ENCODE measurements at regions of chr12 and their contacts with region 1.

Region 1: DNA sequence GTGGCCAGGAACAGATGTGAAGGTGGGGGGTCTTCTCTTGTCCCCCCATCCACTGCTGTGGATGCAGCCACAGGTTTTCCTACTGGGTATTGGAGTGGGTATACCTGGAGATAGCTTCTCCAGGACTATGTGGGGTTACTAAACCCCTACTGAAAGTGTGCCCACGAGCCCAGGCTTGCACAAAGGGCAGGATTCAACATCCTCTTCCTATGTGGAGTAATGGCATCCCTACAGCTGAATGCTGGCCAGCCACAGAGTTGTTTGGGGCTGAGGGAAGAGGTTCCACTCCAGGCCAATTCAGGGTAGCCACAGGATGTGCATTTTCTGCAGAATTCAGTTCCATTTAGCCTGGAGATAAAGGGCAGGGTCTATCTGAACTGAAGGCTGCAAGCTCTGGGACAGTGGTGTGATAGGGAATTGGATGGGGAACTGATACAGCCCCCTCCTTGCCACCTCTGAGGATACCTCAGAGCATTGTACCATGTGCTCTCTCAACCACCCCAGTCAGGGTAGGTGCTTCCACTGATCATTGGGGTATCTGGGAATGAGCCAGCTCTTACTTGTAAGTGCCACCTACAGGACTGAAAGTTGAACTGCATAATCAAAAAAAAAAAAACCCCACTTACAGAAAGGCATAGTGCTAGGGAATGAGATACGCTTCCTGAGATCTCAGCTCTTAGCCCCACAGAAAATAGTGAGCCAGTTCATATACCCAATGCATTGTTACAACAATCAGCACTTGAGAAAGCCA is 187.1 kb downstream of the KITLG start:
- DNase-seq: no peak
- H3K4me3 Mint-ChIP-seq: no peak overlapping the region
- H3K27ac Mint-ChIP-seq: no peak overlapping the region
- H3K4me1 Mint-ChIP-seq: peaks cover 11% of the 10 kb centered on the region
- H3K27me3 Mint-ChIP-seq: peaks cover 2% of the 10 kb centered on the region

Region 2: GRCh38 chr12:88035271-88035906 is 357.8 kb before region 1 on chr12:
- intact Hi-C with region 1: loop called (anchors 10 kb)
- DNase-seq: peak; percentile 97
- H3K4me3 Mint-ChIP-seq: peak overlapping the region; percentile 99
- H3K27ac Mint-ChIP-seq: peak overlapping the region; percentile 98
- H3K4me1 Mint-ChIP-seq: peaks cover 40% of the 10 kb centered on the region
- H3K27me3 Mint-ChIP-seq: no peaks in the 10 kb centered on the region

Region 3: DNA sequence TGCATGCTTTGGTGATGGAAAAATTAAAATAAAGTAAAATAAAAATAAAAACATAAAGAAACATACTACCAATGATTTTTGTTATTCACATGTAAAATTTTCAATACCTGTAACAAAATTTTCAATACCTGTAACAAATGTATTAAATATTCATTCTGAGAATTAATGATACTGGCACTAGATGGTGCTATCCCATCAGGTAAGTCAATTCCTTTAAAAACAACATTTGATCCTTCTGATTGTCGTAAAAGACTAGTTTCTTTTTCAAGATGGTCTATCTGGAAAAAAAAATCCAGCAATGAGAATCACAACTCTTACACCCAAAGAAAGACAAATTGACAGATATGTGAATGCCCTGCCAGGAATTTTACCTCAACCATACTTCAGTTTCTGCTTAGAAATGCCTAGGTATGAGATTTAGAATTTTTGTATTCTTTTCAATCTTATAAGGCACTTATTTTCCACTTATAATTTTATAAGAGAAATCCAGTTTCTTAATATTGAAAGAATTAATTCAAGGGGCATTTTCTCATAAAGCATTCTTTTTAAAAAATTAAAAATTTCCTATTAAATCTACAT is 282.0 kb before region 1 on chr12:
- intact Hi-C with region 1: loop called (anchors 2 kb)
- DNase-seq: no peak
- H3K4me3 Mint-ChIP-seq: no peak overlapping the region
- H3K27ac Mint-ChIP-seq: no peak overlapping the region
- H3K4me1 Mint-ChIP-seq: no peaks in the 10 kb centered on the region
- H3K27me3 Mint-ChIP-seq: no peaks in the 10 kb centered on the region

Region 4: GRCh38 chr12:88141770-88142609 is 251.2 kb before region 1 on chr12 and contains the starts of genes CEP290 and TMTC3:
- intact Hi-C with region 1: loop called (anchors 1 kb)
- DNase-seq: peak; percentile 97
- H3K4me3 Mint-ChIP-seq: peak within 1 kb of the TSS; percentile 91
- H3K27ac Mint-ChIP-seq: peak within 1 kb of the TSS; percentile 96
- H3K4me1 Mint-ChIP-seq: peaks cover 32% of the 10 kb centered on the region
- H3K27me3 Mint-ChIP-seq: no peaks in the 10 kb centered on the region
- total RNA-seq, gene CEP290: 17.2 and 17.9 TPM in 2 replicates
- total RNA-seq, gene TMTC3: 8.2 and 8.3 TPM in 2 replicates

Region 5: GRCh38 chr12:88153959-88154358 is 239.2 kb before region 1 on chr12:
- intact Hi-C with region 1: loop called (anchors 1 kb)
- DNase-seq: no peak
- H3K4me3 Mint-ChIP-seq: no peak overlapping the region
- H3K27ac Mint-ChIP-seq: no peak overlapping the region
- H3K4me1 Mint-ChIP-seq: peaks cover 8% of the 10 kb centered on the region
- H3K27me3 Mint-ChIP-seq: no peaks in the 10 kb centered on the region

Region 6: GRCh38 chr12:88235183-88235833 is 157.9 kb before region 1 on chr12:
- intact Hi-C with region 1: loop called (anchors 1 kb)
- DNase-seq: no peak
- H3K4me3 Mint-ChIP-seq: no peak overlapping the region
- H3K27ac Mint-ChIP-seq: peak overlapping the region; percentile 39
- H3K4me1 Mint-ChIP-seq: peaks cover 13% of the 10 kb centered on the region
- H3K27me3 Mint-ChIP-seq: no peaks in the 10 kb centered on the region

Region 7: DNA sequence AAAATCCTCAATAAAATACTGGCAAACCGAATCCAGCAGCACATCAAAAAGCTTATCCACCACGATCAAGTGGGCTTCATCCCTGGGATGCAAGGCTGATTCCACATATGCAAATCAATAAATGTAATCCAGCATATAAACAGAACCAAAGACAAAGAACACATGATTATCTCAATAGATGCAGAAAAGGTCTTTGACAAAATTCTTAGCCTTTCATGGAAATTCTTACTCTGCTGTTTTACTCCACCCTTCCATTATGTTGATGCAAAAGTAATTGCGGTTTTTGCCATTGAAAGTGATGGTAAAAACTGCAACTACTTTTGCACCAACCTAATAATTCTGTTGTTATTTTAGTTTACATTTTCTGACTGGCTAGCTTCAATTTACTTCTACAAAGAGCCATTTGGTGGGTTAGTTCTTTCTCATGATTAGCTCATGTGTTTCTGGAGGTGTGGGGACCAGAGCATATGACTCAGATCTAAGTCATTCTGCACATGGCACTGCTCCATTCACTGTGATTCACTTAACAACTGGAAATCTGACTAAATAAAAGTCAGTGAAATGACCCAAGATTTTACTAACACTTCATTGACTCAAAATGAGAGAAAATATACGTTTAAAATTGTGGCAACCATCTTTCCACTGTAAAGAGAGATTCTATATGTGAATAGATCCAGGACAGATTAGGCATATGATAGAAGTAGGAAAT is 151.2 kb before region 1 on chr12:
- intact Hi-C with region 1: loop called (anchors 1 kb)
- DNase-seq: no peak
- H3K4me3 Mint-ChIP-seq: no peak overlapping the region
- H3K27ac Mint-ChIP-seq: peak overlapping the region; percentile 89
- H3K4me1 Mint-ChIP-seq: peaks cover 19% of the 10 kb centered on the region
- H3K27me3 Mint-ChIP-seq: no peaks in the 10 kb centered on the region

Region 8: DNA sequence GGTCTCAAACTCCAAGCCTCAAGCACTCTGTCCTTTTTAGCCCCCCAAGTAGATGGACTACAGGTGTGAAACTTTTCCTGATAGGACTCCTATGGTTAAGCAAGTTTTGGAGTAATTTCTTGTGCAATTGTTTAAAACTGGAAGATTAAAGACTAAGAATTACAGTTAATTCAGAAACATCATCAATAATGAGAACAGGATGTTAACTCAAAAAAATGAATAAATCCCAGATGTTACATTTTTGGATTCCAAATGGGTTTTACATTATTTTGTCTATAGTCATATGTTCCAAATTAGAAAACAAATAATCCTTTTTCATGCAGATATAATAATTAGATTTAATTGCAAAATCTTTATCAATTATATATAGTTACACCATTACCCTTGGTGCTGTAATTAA is 211.5 kb after region 1 on chr12:
- intact Hi-C with region 1: no loop called
- DNase-seq: no peak
- H3K4me3 Mint-ChIP-seq: no peak overlapping the region
- H3K27ac Mint-ChIP-seq: no peak overlapping the region
- H3K4me1 Mint-ChIP-seq: no peaks in the 10 kb centered on the region
- H3K27me3 Mint-ChIP-seq: no peaks in the 10 kb centered on the region